Lower leg skin (tissue), 4 donors: ENCODE measurements at regions of chr9 and their contacts with region 1.

Region 1: DNA sequence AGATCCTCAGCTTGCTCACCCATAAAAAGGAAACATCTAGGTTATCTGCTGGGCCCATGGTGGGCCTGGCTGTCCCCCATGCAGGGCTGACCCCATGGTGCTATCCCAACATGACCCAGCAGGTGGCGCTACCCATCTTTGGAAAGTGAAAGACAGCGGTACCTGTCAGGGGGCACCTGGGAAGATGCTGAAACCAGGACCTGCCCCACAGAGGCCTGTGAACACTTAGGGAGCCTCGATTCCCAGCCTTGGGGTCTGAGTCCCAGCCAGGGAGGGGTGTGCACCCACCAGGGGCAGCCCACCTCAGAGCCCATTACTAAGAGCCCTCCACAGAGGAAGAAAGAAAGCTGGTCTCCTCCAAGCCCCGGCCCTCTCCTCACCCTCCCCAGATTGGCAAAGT is 46.6 kb upstream of the IPPK start:
- DNase-seq: peak; percentile 71 to 96
- H3K4me3 ChIP-seq: no peak overlapping the region
- CTCF ChIP-seq: peak in 1 of 3 donors; percentile 67
- POLR2A ChIP-seq: no peak

Region 2: GRCh38 chr9:92266486-92266885 is 450.1 kb before region 1 on chr9:
- intact Hi-C with region 1: no loop called
- DNase-seq: no peak
- H3K4me3 ChIP-seq: no peak overlapping the region
- CTCF ChIP-seq: no peak
- POLR2A ChIP-seq: no peak

Region 3: DNA sequence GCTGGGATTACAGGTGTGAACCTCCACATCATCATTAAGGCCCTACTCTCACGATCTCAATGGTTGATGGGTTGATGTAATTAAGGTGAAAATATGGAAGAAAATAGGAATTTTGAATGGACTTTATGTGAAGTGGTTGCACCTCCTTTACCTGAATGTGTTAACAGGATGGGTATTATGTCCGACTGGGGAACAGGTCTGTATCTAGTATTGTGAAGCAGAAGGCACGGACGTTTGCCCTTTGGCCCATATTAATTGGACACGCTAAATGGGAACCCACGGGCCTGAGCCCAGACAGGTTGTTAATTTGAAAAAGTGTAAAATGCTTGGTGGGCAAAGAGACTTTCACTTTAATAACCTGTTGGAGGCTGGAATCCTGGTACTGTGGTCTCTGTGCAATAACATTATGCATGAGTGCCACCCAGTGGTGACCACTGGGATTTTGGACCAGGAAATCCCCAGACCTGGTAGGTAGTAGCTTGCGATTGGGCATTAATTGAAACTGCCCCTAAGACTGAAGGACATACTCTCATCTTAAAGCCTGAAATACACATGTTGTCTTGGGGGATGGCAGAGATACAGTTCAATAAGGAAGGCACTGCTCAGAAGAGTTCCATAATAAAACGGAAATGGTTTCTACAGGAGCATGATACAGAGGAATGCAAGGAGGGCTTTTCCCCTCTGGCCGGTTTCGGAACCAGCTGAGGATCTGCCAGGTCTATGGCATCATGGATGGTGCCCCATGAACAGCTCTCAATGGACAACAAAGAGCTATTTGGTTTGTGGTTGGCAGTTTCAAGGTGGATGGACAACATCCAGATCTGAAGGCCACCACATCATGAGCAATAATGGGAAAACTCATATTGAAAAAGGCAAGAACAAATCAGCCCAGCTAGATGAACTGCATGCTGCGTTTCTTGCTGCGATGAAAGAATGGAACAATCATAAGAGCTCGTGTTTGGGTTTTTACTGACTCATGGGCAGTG is 74.3 kb after region 1 on chr9:
- intact Hi-C with region 1: loop called (anchors 5 kb)
- DNase-seq: peak; percentile 87 to 94
- H3K4me3 ChIP-seq: no peak overlapping the region
- CTCF ChIP-seq: peak in 1 of 3 donors; percentile 70
- POLR2A ChIP-seq: no peak